Natural killer cell (primary cell): ENCODE measurements at regions of chr6 and their contacts with region 1.

Region 1: DNA sequence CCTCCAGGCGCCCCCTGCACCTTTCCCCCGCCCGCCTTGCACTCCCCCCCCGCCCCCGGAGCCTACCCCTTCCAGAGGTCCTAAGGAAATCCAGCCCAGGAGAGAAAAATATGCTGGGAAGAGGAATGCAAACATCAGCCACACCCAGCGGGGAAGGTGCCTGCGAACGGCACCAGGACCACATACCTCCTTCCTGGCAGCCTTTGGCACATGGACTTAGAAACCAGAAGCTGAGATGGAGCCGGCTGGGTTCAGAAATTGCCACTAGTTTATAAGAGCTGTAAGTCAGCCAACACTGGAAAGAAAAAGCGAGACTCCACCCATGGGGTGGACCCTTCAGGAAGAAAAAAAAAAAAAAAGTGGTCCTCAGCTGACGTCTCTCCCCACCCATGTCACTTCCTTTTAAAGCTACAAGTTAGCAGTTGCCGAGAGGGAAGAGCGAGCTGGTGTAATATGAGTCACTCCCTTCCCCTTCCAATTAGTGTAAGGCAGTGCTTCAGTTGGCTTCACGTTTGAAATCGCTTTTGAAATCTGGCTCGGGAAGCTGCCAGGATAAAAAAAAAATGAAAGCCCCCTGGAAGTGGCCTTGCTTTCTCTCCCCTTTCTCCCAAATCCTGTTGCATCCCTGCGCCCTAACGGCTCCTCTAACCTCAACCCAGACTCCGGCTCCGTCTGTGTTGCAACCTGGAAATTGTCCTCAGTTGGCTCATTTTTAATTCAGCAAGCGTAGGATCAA is at the start of gene AGPAT4:
- DNase-seq: peak; percentile 62 to 93
- ATAC-seq: peak; percentile 88 to 98 (median 94)
- H3K4me3 ChIP-seq: peak within 1 kb of the TSS; percentile 61
- H3K4me3 Mint-ChIP-seq: peak within 1 kb of the TSS; percentile 95
- H3K27ac ChIP-seq: peak within 1 kb of the TSS; percentile 89
- H3K27ac Mint-ChIP-seq: peak within 1 kb of the TSS; percentile 94 to 96
- H3K4me1 ChIP-seq: peaks cover 6% of the 10 kb centered on the region
- H3K4me1 Mint-ChIP-seq: peaks cover 29 to 36% of the 10 kb centered on the region in 2 donors
- H3K27me3 ChIP-seq: no peaks in the 10 kb centered on the region
- H3K27me3 Mint-ChIP-seq: peaks cover 3 to 7% of the 10 kb centered on the region in 2 donors
- CTCF ChIP-seq: no peak
- total RNA-seq, gene AGPAT4: 24.5 to 38.1 (median 25.8) TPM

Region 2: DNA sequence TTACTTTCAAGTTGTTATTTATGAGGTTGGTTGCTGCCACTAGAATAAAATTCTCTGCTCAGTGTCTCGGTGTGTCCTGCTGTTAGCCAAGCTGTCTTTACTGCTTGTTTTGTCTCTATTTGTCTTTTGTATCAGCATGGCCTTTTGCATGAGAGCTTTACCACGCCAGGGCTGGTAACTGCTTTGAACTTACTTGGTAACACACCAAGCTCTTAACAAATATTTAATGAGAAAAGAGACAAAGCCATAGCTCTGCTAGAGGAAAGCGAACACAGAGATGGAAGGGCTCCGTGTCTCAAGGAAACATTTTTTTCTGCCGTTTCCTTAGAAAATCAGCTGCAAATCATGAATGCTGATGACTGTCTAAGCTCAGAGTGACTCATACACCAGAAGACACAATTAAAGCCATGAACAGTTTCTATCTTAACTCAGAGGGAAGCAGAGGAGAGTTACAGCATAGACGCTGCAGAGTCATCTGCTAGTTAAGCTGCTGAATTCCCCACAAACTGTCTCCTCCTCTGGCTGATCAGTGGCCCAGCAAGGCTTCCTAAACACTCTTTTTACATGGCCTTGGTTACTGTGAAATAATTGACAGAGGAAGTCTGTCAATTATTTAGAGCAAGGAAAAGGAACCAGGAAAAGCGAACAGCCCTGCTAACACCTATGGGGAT is 44.9 kb before region 1 on chr6:
- intact Hi-C with region 1: loop called (anchors 1 kb)
- DNase-seq: no peak
- ATAC-seq: no peak
- H3K4me3 ChIP-seq: no peak overlapping the region
- H3K4me3 Mint-ChIP-seq: peak overlapping the region; percentile 49
- H3K27ac ChIP-seq: no peak overlapping the region
- H3K27ac Mint-ChIP-seq: peak overlapping the region; percentile 24 to 87
- H3K4me1 ChIP-seq: peaks cover 49% of the 10 kb centered on the region
- H3K4me1 Mint-ChIP-seq: peaks cover 49 to 61% of the 10 kb centered on the region in 2 donors
- H3K27me3 ChIP-seq: no peaks in the 10 kb centered on the region
- H3K27me3 Mint-ChIP-seq: peaks cover 5 to 6% of the 10 kb centered on the region in 2 donors
- CTCF ChIP-seq: no peak

Region 3: DNA sequence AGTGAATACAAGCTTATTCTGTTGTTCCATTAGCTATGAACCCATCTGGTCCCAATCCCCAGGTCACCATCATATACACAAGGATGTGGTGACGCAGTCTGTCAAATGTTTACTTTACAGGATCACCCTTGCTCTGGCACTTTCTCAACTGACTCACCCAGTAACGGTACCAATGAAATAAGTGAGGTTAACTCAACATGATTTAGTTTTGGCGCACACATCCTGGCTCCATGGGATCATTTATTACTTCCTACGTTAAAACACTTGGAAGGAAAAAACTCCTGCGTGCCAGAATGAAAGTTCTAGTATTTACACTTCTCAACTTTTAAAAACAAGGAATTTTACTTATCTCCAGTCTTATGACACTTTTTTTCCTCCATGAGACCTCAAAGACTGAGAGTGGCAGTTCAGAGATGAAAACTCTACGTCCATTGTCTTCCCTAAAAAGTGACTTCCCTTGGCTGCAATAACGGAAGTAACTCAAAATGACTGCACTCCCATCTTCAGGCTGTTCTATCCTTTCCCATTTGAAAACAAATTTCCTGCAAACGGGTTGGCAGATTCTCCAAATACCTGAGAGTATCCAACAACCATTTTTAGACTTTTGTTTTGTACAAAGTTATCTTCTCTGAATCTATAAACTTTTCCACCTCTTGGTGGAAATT is 16.0 kb before region 1 on chr6:
- intact Hi-C with region 1: loop called (anchors 2 kb)
- DNase-seq: no peak
- ATAC-seq: no peak
- H3K4me3 ChIP-seq: no peak overlapping the region
- H3K4me3 Mint-ChIP-seq: no peak overlapping the region
- H3K27ac ChIP-seq: no peak overlapping the region
- H3K27ac Mint-ChIP-seq: peak overlapping the region; percentile 64
- H3K4me1 ChIP-seq: peaks cover 19% of the 10 kb centered on the region
- H3K4me1 Mint-ChIP-seq: peaks cover 52 to 59% of the 10 kb centered on the region in 2 donors
- H3K27me3 ChIP-seq: no peaks in the 10 kb centered on the region
- H3K27me3 Mint-ChIP-seq: peaks cover 4 to 34% of the 10 kb centered on the region in 2 donors
- CTCF ChIP-seq: no peak

Region 4: GRCh38 chr6:161353208-161353613 is 79.3 kb after region 1 on chr6:
- intact Hi-C with region 1: no loop called
- DNase-seq: no peak
- ATAC-seq: no peak
- H3K4me3 ChIP-seq: no peak overlapping the region
- H3K4me3 Mint-ChIP-seq: no peak overlapping the region
- H3K27ac ChIP-seq: no peak overlapping the region
- H3K27ac Mint-ChIP-seq: no peak overlapping the region
- H3K4me1 ChIP-seq: peaks cover 17% of the 10 kb centered on the region
- H3K4me1 Mint-ChIP-seq: peaks cover 9 to 24% of the 10 kb centered on the region in 2 donors
- H3K27me3 ChIP-seq: no peaks in the 10 kb centered on the region
- H3K27me3 Mint-ChIP-seq: peaks cover 0 to 4% of the 10 kb centered on the region in 2 donors
- CTCF ChIP-seq: no peak